ENCODE measurements at regions of chr12 and their contacts with region 1.

Region 1: GRCh38 chr12:15584366-15585041 is 204.7 kb downstream of the EPS8 start:
- DNase-seq: no peak
- ATAC-seq: peak; percentile 68
- H3K4me3 ChIP-seq: no peak overlapping the region
- H3K27ac ChIP-seq: no peak overlapping the region
- H3K4me1 ChIP-seq: no peaks in the 10 kb centered on the region
- H3K27me3 ChIP-seq: no peaks in the 10 kb centered on the region
- CTCF ChIP-seq: peak; percentile 72

Region 2: GRCh38 chr12:15193946-15194345 is 390.6 kb before region 1 on chr12:
- intact Hi-C with region 1: no loop called
- DNase-seq: no peak
- ATAC-seq: no peak
- H3K4me3 ChIP-seq: no peak overlapping the region
- H3K27ac ChIP-seq: no peak overlapping the region
- H3K4me1 ChIP-seq: peaks cover 12% of the 10 kb centered on the region
- H3K27me3 ChIP-seq: no peaks in the 10 kb centered on the region
- CTCF ChIP-seq: no peak

Region 3: GRCh38 chr12:15532364-15532977 is 52.0 kb before region 1 on chr12:
- intact Hi-C with region 1: loop called (anchors 10 kb)
- DNase-seq: no peak
- ATAC-seq: peak; percentile 87
- H3K4me3 ChIP-seq: no peak overlapping the region
- H3K27ac ChIP-seq: no peak overlapping the region
- H3K4me1 ChIP-seq: no peaks in the 10 kb centered on the region
- H3K27me3 ChIP-seq: no peaks in the 10 kb centered on the region
- CTCF ChIP-seq: peak; percentile 54